Calu3 (cell line): ENCODE measurements at regions of chr7 and their contacts with region 1.

Region 1: DNA sequence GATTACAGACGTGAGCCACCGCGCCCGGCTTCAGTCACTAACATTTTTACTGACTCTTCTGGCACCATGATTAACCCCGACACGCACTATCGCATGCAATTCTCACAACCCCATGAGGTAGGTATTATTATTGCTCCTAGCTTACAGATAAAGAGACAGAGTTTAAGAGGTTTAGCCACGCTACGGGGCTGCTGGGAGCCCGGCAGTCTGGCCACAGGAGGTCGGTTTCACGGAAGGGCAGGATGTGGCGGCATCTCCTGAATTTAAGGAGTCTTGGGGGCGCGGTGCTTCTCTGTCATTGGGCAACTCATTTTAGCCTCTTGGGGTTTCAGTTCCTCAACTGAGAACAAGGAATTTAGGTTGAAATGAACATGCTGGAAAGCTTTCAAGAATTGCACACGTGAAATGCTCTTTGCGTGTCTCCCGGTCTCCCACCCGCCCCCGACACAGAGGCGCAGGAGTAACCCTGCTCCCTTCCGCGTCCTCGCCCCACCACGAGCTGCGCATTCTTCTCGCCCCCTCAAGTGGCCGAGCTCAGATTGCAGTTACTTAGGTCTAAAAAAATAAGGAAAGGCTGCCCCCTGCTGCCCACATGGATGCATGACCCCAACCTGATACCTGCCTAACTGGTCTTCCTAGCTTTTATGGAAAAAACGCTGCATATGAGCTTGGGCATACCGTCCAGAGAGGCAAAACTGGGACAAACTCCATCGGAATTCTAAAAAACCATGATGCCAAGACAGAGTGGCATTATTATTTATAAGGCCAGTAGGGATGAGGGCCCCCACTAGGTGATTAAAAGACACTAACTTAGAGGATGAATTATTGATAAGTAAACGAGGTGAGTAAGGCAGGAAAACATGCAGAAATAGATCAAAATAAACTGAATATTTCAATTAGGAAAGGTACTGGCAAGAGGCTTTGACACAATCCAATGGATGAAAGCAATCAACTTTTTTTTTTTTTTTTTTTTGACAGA is 12.4 kb downstream of the PRSS2 start:
- DNase-seq: peak; percentile 89
- H3K4me3 Mint-ChIP-seq: peak overlapping the region; percentile 64
- H3K27ac Mint-ChIP-seq: no peak overlapping the region
- H3K4me1 Mint-ChIP-seq: peaks cover 12% of the 10 kb centered on the region
- H3K27me3 Mint-ChIP-seq: peaks cover 37% of the 10 kb centered on the region
- CTCF ChIP-seq: peak; percentile 95

Region 2: GRCh38 chr7:142603870-142604448 is 179.3 kb before region 1 on chr7:
- CTCF ChIA-PET with region 1: interaction called, 13 read pairs
- intact Hi-C with region 1: loop called (anchors 2 kb)
- DNase-seq: peak; percentile 58
- H3K4me3 Mint-ChIP-seq: no peak overlapping the region
- H3K27ac Mint-ChIP-seq: no peak overlapping the region
- H3K4me1 Mint-ChIP-seq: no peaks in the 10 kb centered on the region
- H3K27me3 Mint-ChIP-seq: peaks cover 65% of the 10 kb centered on the region
- CTCF ChIP-seq: peak; percentile 47

Region 3: GRCh38 chr7:142669074-142669654 is 114.0 kb before region 1 on chr7:
- CTCF ChIA-PET with region 1: interaction called, 6 read pairs
- intact Hi-C with region 1: loop called (anchors 1 kb)
- DNase-seq: no peak
- H3K4me3 Mint-ChIP-seq: no peak overlapping the region
- H3K27ac Mint-ChIP-seq: no peak overlapping the region
- H3K4me1 Mint-ChIP-seq: no peaks in the 10 kb centered on the region
- H3K27me3 Mint-ChIP-seq: peaks cover 52% of the 10 kb centered on the region
- CTCF ChIP-seq: no peak

Region 4: DNA sequence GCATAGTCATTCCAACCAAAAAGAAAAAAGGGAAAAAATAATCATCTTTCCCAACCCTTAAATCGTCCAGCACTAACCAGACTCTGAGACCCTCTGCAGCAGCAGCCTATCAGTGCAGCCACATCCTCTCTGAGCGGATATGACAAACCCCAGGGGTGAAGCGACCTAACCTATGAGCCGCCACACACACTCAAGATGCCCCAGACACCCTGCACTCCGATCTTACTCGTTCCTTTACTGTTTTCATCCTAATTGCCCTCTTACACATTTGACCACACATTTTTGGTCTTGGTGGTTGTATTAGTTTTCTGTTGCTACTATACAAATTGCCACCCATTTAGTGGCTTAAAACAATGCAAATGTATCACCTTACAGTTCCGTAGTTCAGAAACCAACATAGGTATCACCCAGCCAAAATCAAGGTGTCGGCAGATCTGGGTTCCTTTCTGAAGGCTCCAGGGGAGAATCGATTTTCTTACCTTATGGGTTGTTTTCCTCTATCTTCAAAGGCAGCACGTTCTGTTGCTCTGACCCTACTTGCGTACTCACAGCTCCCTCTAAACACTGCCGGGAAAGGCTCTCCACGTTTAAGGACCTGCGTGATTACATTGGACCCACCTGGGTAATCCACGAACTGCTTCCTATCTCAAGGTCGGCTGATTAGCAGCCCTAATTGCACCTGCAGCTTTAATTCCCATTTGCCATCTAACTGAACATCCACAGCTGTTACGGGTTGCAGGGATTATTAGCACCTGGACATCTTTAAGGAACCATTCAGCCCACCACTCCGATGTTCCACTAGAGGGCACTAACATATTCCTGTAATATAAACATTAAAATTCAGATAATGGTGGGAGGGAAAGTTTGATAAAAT is 71.2 kb before region 1 on chr7:
- CTCF ChIA-PET with region 1: interaction called, 62 read pairs
- intact Hi-C with region 1: loop called (anchors 1 kb)
- DNase-seq: peak; percentile 18
- H3K4me3 Mint-ChIP-seq: no peak overlapping the region
- H3K27ac Mint-ChIP-seq: no peak overlapping the region
- H3K4me1 Mint-ChIP-seq: peaks cover 12% of the 10 kb centered on the region
- H3K27me3 Mint-ChIP-seq: peaks cover 80% of the 10 kb centered on the region
- CTCF ChIP-seq: peak; percentile 59

Region 5: DNA sequence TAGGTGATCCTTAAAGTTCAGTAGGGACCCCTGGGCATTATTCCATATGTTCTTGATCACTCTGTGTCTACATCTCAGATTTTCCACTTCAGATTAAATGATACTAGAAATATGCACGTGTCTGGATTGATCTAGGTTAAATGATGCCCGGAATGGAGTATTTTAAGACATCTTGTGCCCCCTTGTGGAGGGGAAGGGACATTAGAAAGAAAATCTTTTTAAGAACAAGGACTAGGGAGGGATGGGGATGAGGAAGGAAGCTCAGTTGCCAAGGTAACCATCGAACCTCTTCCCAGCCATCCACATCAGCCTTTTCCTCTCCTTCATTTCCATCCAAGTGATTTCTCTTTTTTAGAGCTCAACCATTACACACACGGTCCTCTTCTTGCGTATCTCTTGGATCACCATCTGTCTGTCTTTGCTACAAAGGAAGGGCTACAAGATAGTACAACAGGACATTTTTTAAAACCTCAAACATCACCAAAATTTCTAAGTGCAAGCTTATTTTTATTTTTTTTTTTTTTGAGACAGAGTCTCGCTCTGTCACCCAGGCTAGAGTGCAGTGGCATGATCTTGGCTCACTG is 28.0 kb after region 1 on chr7:
- CTCF ChIA-PET with region 1: interaction called, 10 read pairs
- intact Hi-C with region 1: loop called (anchors 2 kb)
- DNase-seq: peak; percentile 39
- H3K4me3 Mint-ChIP-seq: no peak overlapping the region
- H3K27ac Mint-ChIP-seq: no peak overlapping the region
- H3K4me1 Mint-ChIP-seq: peaks cover 47% of the 10 kb centered on the region
- H3K27me3 Mint-ChIP-seq: peaks cover 66% of the 10 kb centered on the region
- CTCF ChIP-seq: peak; percentile 73